Naive thymus-derived CD4-positive, alpha-beta T cell (primary cell): ENCODE measurements at regions of chr13 and their contacts with region 1.

Region 1: GRCh38 chr13:46648166-46648635 is 95.2 kb downstream of the LRCH1 start:
- DNase-seq: peak in 1 of 9 donors; percentile 14
- ATAC-seq: peak; percentile 52
- H3K4me3 ChIP-seq: no peak overlapping the region
- H3K4me3 Mint-ChIP-seq: peak overlapping the region in 1 of 10 donors; percentile 8
- H3K27ac ChIP-seq: no peak overlapping the region
- H3K27ac Mint-ChIP-seq: peak overlapping the region in 3 of 9 donors; percentile 7 to 72 (median 48)
- H3K4me1 ChIP-seq: peaks cover 0 to 8% of the 10 kb centered on the region in 2 donors
- H3K4me1 Mint-ChIP-seq: peaks cover 13 to 62% (median 53%) of the 10 kb centered on the region in 7 donors
- H3K27me3 ChIP-seq: no peaks in the 10 kb centered on the region
- H3K27me3 Mint-ChIP-seq: no peaks in the 10 kb centered on the region

Region 2: GRCh38 chr13:46544208-46544607 is 104.0 kb before region 1 on chr13:
- CTCF ChIA-PET with region 1: no interaction called
- POLR2A ChIA-PET with region 1: no interaction called
- intact Hi-C with region 1: no loop called
- DNase-seq: no peak
- ATAC-seq: no peak
- H3K4me3 ChIP-seq: no peak overlapping the region
- H3K4me3 Mint-ChIP-seq: peak overlapping the region in 1 of 10 donors; percentile 45
- H3K27ac ChIP-seq: no peak overlapping the region
- H3K27ac Mint-ChIP-seq: peak overlapping the region in 1 of 9 donors; percentile 87
- H3K4me1 ChIP-seq: no peaks in the 10 kb centered on the region
- H3K4me1 Mint-ChIP-seq: peaks cover 0 to 5% (median 0%) of the 10 kb centered on the region in 7 donors
- H3K27me3 ChIP-seq: no peaks in the 10 kb centered on the region
- H3K27me3 Mint-ChIP-seq: peaks cover 0 to 14% (median 6%) of the 10 kb centered on the region in 5 donors

Region 3: DNA sequence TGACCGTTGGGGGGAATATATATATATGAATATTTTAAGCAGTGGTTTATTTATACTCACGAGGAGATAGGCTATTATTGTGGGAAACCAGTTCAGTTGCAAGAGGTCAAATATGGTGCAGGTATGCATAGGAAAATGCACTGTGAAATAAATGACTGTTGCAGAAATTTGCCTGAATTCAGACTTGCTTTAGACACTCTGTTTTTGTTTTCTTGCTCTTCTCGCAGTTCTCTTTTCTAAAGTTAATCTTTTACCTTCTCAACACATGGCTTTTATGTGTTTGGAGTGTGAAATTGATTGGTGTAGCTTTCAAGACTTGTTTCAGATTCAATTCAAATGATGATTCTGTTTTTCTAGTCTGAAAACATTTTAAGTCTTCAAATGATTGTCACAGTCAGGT is 14.5 kb after region 1 on chr13:
- CTCF ChIA-PET with region 1: interaction called, 3 read pairs
- POLR2A ChIA-PET with region 1: no interaction called
- intact Hi-C with region 1: loop called in 1 of 2 experiments (anchors 2 kb)
- DNase-seq: no peak
- ATAC-seq: no peak
- H3K4me3 ChIP-seq: no peak overlapping the region
- H3K4me3 Mint-ChIP-seq: no peak overlapping the region
- H3K27ac ChIP-seq: no peak overlapping the region
- H3K27ac Mint-ChIP-seq: peak overlapping the region in 3 of 9 donors; percentile 2 to 39 (median 19)
- H3K4me1 ChIP-seq: peaks cover 0 to 20% of the 10 kb centered on the region in 2 donors
- H3K4me1 Mint-ChIP-seq: peaks cover 33 to 68% (median 51%) of the 10 kb centered on the region in 7 donors
- H3K27me3 ChIP-seq: no peaks in the 10 kb centered on the region
- H3K27me3 Mint-ChIP-seq: no peaks in the 10 kb centered on the region

Region 4: GRCh38 chr13:46679369-46680120 is 31.3 kb after region 1 on chr13:
- CTCF ChIA-PET with region 1: no interaction called
- POLR2A ChIA-PET with region 1: no interaction called
- intact Hi-C with region 1: loop called in 1 of 2 experiments (anchors 2 kb)
- DNase-seq: peak in 8 of 9 donors; percentile 14 to 64 (median 44)
- ATAC-seq: peak; percentile 92
- H3K4me3 ChIP-seq: peak overlapping the region; percentile 39
- H3K4me3 Mint-ChIP-seq: no peak overlapping the region
- H3K27ac ChIP-seq: peak overlapping the region; percentile 55
- H3K27ac Mint-ChIP-seq: no peak overlapping the region
- H3K4me1 ChIP-seq: peaks cover 5 to 20% of the 10 kb centered on the region in 2 donors
- H3K4me1 Mint-ChIP-seq: peaks cover under 1 to 35% (median 9%) of the 10 kb centered on the region in 7 donors
- H3K27me3 ChIP-seq: no peaks in the 10 kb centered on the region
- H3K27me3 Mint-ChIP-seq: no peaks in the 10 kb centered on the region

Region 5: GRCh38 chr13:47572375-47572774 is 924.2 kb after region 1 on chr13:
- CTCF ChIA-PET with region 1: no interaction called
- POLR2A ChIA-PET with region 1: no interaction called
- intact Hi-C with region 1: no loop called
- DNase-seq: no peak
- ATAC-seq: no peak
- H3K4me3 ChIP-seq: no peak overlapping the region
- H3K4me3 Mint-ChIP-seq: no peak overlapping the region
- H3K27ac ChIP-seq: no peak overlapping the region
- H3K27ac Mint-ChIP-seq: no peak overlapping the region
- H3K4me1 ChIP-seq: no peaks in the 10 kb centered on the region
- H3K4me1 Mint-ChIP-seq: no peaks in the 10 kb centered on the region
- H3K27me3 ChIP-seq: no peaks in the 10 kb centered on the region
- H3K27me3 Mint-ChIP-seq: peaks cover 0 to 7% (median 0%) of the 10 kb centered on the region in 5 donors